Breast epithelium (tissue), 4 donors: ENCODE measurements at regions of chr14 and their contacts with region 1.

Region 1: GRCh38 chr14:72982146-72982708 is 44.7 kb downstream of the ZFYVE1 start:
- DNase-seq: no peak
- H3K4me3 ChIP-seq: no peak overlapping the region
- H3K27ac ChIP-seq: no peak overlapping the region
- H3K4me1 ChIP-seq: no peaks in the 10 kb centered on the region
- H3K27me3 ChIP-seq: no peaks in the 10 kb centered on the region
- CTCF ChIP-seq: no peak
- POLR2A ChIP-seq: no peak

Region 2: DNA sequence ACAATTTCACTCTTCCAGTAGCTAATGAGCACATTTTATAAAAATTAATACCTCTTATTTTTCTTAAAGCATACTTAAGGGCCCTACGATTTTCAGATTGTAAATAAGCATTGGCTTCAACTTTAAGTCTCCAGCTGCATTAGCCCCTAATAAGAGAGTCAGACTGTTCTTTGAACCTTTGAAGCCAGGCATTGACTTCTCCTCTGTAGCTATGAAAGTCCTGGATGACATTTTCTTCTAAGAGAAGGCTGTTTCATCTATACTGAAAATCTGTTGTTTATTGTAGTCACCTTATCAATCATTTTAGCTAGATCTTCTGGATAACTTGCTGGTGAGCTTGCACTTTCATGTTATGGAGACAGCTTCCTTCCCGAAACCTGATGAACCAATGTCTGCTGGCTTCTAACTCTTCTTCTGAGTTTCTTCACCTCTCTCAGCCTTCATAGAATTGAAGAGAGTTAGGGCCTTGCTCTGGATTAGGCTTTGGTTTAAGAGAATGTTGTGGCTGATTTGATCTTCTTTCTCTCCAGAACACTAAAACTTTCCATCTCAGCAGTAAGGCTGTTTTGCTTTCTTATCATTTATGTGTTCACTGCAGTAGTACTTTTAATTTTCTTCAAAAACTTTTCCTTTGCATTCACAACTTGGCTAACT is 1427.1 kb before region 1 on chr14:
- intact Hi-C with region 1: loop called (anchors 5 kb)
- DNase-seq: no peak
- H3K4me3 ChIP-seq: no peak overlapping the region
- H3K27ac ChIP-seq: no peak overlapping the region
- H3K4me1 ChIP-seq: no peaks in the 10 kb centered on the region
- H3K27me3 ChIP-seq: no peaks in the 10 kb centered on the region
- CTCF ChIP-seq: no peak
- POLR2A ChIP-seq: no peak

Region 3: GRCh38 chr14:72736314-72736715 is 245.9 kb before region 1 on chr14:
- intact Hi-C with region 1: no loop called
- DNase-seq: no peak
- H3K4me3 ChIP-seq: no peak overlapping the region
- H3K27ac ChIP-seq: no peak overlapping the region
- H3K4me1 ChIP-seq: no peaks in the 10 kb centered on the region
- H3K27me3 ChIP-seq: no peaks in the 10 kb centered on the region
- CTCF ChIP-seq: no peak
- POLR2A ChIP-seq: no peak

Region 4: DNA sequence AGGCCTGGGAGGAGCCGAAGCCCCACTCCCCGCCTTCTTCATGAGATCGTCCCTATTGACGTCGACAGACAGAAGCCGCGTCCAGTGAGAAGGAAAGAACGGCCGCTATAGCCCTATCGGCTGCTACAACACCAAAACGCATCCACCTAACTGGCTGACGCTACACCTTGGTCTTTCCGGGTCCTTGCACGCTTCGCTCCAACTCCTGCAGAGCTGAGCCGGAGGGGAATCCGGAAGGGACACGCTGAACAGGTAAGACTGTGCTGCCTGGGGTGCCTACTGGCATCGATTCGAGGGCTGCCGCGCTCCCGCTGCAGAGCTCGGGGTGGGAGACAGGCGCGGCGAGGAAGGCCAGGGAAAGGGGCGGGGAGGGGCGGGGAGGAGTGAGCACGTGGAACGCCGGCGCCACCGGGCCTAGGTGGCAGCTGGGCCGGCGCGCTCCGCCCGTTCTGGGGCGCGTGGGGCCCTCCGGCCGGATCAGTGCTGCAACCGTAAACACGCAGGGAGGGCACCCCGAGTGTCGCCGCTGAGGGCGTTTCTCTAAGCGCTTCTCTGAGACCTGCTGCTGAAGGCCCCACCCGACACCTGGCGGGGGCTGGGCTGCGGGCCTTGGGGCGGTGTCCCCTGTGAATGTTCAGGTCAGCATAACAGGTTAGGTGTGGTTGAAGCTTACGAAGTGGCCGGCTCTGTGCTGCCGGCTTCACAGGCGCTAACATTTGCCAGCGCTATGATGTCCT is 55.8 kb before region 1 on chr14 and contains the start of gene DCAF4:
- intact Hi-C with region 1: no loop called
- DNase-seq: peak; percentile 93 to 96
- H3K4me3 ChIP-seq: peak within 1 kb of the TSS; percentile 71 to 82 (median 82)
- H3K27ac ChIP-seq: peak within 1 kb of the TSS; percentile 65 to 69
- H3K4me1 ChIP-seq: no peaks in the 10 kb centered on the region
- H3K27me3 ChIP-seq: no peaks in the 10 kb centered on the region
- CTCF ChIP-seq: no peak
- POLR2A ChIP-seq: no peak
- total RNA-seq, gene DCAF4: 19.8 to 49.5 (median 36.1) TPM